HEK293 (cell line): ENCODE measurements at regions of chr20 and their contacts with region 1.

Region 1: DNA sequence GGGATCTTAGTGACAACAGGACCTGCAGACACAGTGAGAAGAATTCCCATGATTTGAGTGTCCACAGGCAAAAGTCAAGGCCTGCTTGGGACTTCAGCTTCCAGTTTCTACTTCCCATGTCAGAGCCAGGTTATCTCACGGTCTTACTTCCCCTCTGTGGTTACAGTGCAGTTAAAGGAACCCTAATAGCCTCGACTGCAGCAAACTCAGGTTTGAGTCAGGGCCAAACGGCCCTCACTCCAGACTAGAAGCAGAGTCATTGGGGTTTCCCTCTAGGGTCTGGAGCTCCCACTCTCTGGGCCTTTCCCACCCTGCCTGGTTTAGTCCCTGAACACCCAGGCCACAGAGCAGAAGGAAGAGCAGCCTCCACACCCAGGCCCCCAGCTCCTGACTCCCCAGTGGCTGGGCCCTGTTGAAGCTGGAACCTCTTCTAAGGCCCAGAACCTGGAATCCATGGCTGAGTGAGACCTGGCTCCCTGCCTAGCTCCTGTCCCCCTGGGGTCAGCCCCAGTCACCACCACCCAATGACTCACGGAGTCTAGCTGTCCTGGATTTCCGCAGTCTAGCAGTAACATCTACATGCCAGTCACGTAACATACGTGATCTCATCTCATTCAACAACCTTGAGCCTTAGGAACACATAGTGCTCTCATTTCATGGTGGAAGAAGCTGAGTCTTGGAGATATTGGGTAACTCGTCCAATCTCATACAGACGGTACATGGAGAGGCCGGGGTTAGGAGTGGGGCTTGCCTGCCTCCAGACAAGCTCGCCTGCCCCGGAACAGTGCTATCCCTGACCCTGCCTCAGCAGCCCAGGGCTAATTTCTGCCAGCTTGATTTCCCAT is 9.2 kb upstream of the GHRH start:
- H3K4me3 ChIP-seq: no peak overlapping the region
- H3K27ac ChIP-seq: no peak overlapping the region
- H3K4me1 ChIP-seq: no peaks in the 10 kb centered on the region
- CTCF ChIP-seq: no peak

Region 2: GRCh38 chr20:36773597-36774390 is 497.0 kb before region 1 on chr20 and contains the start of gene DSN1:
- CTCF ChIA-PET with region 1: no interaction called
- POLR2A ChIA-PET with region 1: no interaction called
- H3K4me3 ChIP-seq: peak within 1 kb of the TSS; percentile 81
- H3K27ac ChIP-seq: peak within 1 kb of the TSS; percentile 77
- H3K4me1 ChIP-seq: peaks cover 4% of the 10 kb centered on the region; the same call in 1 of the 2 replicates
- CTCF ChIP-seq: no peak; the same call in 1 of the 2 replicates

Region 3: GRCh38 chr20:37055276-37055675 is 215.5 kb before region 1 on chr20:
- CTCF ChIA-PET with region 1: no interaction called
- POLR2A ChIA-PET with region 1: no interaction called
- H3K4me3 ChIP-seq: no peak overlapping the region
- H3K27ac ChIP-seq: no peak overlapping the region
- H3K4me1 ChIP-seq: no peaks in the 10 kb centered on the region
- CTCF ChIP-seq: no peak

Region 4: DNA sequence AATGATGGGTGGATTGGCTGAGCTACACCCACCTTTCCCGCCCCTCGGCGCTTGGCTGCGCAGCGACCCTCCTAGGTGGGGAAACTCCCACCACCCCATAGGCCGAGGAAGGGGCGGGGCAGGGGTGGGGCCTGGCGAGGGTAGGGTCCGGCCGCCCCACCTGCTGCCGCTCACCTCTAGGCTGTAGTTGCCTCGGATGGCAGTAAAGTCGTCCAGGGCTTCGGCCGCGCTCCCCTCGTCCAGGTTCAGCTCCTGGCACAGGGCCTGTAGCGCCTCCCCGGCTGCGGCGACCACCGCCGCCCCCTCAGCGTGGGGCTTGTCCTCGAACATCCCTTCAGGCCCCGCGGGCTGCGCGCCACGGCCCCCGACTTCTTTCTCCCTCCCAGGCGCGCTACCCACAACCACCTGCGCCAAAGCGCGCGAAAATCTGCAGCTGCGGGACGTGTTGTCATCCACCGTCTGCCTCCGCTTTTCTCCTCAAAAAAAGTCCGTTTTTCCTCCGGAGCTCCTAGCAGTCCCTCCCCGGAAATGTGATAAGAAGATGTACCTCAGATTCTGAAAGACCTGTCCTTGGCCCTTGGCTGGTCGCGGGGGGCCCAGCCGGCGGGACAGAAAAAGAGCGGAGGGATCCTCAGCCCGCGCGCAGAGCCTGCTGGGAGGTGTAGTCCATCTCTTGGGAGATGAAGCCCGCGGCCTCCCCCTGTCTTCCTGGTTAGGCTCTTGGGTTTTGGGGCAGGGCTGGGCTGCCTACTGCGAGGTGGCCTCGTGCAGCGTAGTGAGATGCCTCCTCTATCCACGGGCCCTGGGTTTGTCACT is 175.0 kb before region 1 on chr20 and contains the start of gene RBL1:
- CTCF ChIA-PET with region 1: no interaction called
- POLR2A ChIA-PET with region 1: no interaction called
- H3K4me3 ChIP-seq: peak within 1 kb of the TSS; percentile 74
- H3K27ac ChIP-seq: peak within 1 kb of the TSS; percentile 93
- H3K4me1 ChIP-seq: peaks cover 2% of the 10 kb centered on the region
- CTCF ChIP-seq: peak; percentile 48; the same call in 1 of the 2 replicates

Region 5: DNA sequence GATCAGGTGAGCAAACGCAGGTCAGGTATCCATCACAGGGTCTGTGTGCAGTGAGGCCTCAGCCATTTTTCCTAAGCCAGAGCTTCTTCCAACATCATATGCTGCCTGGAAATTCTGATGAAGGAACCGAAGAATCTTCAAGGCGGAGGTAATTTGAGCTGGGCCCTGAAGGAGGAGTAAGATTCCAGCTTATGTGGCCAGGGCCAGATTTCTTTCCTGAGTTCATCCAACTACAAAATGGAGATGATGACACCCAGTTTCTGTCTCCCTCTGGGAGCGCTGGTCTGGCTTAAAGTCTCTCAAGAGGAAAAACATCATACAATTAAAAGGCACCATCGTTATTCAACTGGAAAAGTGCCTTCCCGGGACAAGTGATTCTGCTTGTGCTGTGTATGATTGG is 11.8 kb after region 1 on chr20:
- CTCF ChIA-PET with region 1: interaction called, 17 read pairs
- POLR2A ChIA-PET with region 1: no interaction called
- H3K4me3 ChIP-seq: no peak overlapping the region
- H3K27ac ChIP-seq: no peak overlapping the region
- H3K4me1 ChIP-seq: no peaks in the 10 kb centered on the region
- CTCF ChIP-seq: peak; percentile 30; the same call in 1 of the 2 replicates

Region 6: DNA sequence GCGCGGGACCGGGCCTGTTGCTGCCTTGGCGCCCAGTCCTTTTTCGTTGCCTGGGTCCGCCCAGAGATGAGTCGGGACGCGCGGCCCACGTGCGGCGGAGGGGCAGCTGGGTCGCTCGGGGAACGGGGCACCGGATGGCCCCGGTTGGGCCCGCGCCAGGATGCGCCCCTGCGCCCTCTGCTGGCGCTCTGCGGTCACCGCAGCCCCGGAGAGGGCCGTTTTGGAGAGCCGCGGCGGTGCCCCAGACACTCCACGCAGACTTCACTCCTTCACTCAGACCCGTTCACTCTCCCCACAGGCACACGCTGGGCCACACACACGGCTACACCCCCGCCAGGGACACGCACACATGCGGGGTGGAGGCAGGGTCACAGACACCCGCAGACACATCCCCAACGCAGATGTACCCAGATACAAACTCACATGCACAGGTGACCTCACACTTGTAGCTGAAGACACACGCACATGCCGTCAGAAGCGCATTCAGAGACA is 113.9 kb after region 1 on chr20:
- CTCF ChIA-PET with region 1: interaction called, 25 read pairs
- POLR2A ChIA-PET with region 1: interaction called, 3 read pairs
- H3K4me3 ChIP-seq: no peak overlapping the region
- H3K27ac ChIP-seq: no peak overlapping the region
- H3K4me1 ChIP-seq: no peaks in the 10 kb centered on the region
- CTCF ChIP-seq: peak; percentile 90

Region 7: DNA sequence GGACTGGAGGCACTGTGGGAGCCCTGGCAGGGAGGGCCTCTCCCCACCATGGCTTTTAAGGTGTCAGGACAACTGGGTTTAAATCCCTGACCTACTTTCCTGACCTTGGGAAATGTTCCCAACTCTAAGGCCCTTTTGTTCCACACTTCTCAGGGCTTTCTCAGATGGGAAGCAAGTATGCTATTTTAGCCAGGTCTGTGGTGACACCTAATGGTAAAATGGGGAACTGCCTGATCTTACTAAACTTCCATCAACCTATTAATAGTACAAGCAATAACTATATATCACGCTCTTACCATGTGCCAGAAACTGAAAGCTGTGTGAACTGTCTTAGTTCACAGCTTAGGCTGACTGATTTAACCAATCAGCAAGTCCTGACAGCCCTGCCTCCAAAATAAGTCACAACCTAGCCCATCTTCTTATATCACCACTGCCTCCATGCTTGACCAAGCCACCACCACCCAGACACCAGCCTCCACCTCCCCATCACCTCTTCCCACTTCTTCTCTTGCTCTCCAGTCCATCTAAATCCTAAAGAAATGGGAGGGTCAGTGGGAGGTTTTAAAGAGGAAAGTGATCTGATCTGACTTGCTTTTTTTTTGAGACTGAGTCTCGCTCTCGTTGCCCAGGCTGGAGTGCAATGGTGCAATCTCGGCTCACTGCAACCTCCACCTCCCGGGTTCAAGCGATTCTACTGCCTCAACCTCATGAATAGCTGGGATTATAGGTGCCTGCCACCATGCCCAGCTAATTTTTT is 263.8 kb after region 1 on chr20:
- CTCF ChIA-PET with region 1: interaction called, 125 read pairs
- POLR2A ChIA-PET with region 1: no interaction called
- H3K4me3 ChIP-seq: no peak overlapping the region
- H3K27ac ChIP-seq: no peak overlapping the region
- H3K4me1 ChIP-seq: no peaks in the 10 kb centered on the region
- CTCF ChIP-seq: peak; percentile 65; the same call in 1 of the 2 replicates